Activated CD4-positive, alpha-beta T cell treated with anti-CD3 and anti-CD28 coated beads, Interleukin-2, amount 10 ng/mL, durations not matched to agents 24 days and 14 days (primary cell): ENCODE measurements at regions of chr17 and their contacts with region 1.

Region 1: DNA sequence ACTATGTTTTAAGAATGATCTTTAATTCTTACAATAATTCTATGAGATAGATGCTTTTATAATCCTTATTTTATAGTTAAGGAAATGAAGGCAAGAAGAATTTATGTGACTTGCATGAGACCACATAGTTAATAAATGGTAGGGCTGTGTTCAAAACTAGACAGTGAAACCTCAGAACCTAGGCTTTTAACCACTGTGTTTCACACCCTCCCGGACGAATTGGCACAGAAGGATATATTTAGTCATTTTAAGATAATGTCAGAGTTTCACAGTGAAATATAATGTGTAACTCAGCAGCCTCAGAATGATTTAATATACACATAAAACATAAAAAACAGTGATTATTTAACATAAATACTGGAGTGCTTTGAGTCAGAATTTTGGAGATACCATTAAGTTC is 57.0 kb downstream of the NSRP1 start:
- DNase-seq: no peak
- H3K4me3 Mint-ChIP-seq: no peak overlapping the region
- H3K27ac Mint-ChIP-seq: no peak overlapping the region
- H3K4me1 Mint-ChIP-seq: peaks cover 11% of the 10 kb centered on the region
- H3K27me3 Mint-ChIP-seq: no peaks in the 10 kb centered on the region

Region 2: DNA sequence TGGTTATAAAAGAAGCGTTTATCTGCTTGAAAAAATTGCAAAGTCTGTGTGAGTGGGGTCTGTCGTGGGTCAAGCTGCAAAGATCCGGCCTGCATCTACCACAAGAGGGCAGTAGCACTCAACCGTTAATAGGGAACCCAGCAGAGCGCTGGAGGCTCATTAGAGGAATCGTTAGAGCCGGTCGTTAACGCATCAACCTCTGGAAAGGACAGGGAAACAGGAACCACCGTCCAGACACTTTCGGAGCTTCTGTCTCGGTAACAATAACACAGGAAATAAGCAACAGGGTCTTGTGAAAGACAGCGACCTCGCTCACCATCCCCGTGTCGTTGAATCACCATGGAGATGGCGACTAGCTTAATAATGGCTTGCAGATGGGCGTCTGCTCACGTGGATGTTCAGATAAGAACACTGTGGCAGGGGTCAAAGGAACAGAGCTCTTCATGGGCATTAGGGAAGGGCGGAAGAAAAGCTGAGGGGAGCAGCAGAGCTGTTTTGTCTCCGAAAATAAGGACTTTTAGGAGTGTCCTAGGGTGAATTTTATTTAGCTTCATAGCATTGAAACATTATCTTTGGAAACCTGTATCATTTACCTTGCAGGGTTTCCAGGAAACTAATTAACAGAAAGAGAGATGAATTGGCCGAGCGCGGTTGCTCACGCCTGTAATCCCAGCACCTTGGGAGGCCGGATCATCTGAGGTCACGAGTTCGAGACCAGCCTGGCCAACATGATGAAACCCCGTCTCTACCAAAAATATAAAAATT is 68.9 kb before region 1 on chr17:
- intact Hi-C with region 1: no loop called
- DNase-seq: peak; percentile 91
- H3K4me3 Mint-ChIP-seq: peak overlapping the region; percentile 81
- H3K27ac Mint-ChIP-seq: no peak overlapping the region
- H3K4me1 Mint-ChIP-seq: peaks cover 5% of the 10 kb centered on the region
- H3K27me3 Mint-ChIP-seq: peaks cover 16% of the 10 kb centered on the region

Region 3: DNA sequence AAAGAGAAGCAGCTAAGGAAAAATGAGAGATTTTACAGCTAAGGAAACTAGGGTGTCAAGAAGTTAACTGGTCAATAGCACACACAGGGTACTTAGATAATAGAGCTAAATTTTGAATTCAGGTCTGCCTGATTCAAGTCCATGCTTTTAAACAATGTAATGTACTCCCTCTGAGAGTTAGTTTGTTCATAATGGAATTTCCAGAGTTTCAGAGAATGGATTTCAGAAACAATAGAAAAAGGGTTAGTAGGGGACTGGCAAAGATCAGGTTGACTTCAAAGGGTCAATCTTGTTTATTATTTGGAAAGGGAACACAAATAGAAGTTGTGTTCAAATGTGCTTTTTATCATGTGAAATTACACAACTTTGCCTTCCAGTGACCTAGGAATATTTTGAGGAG is 39.1 kb before region 1 on chr17:
- intact Hi-C with region 1: no loop called
- DNase-seq: no peak
- H3K4me3 Mint-ChIP-seq: no peak overlapping the region
- H3K27ac Mint-ChIP-seq: peak overlapping the region; percentile 27
- H3K4me1 Mint-ChIP-seq: peaks cover 22% of the 10 kb centered on the region
- H3K27me3 Mint-ChIP-seq: no peaks in the 10 kb centered on the region

Region 4: DNA sequence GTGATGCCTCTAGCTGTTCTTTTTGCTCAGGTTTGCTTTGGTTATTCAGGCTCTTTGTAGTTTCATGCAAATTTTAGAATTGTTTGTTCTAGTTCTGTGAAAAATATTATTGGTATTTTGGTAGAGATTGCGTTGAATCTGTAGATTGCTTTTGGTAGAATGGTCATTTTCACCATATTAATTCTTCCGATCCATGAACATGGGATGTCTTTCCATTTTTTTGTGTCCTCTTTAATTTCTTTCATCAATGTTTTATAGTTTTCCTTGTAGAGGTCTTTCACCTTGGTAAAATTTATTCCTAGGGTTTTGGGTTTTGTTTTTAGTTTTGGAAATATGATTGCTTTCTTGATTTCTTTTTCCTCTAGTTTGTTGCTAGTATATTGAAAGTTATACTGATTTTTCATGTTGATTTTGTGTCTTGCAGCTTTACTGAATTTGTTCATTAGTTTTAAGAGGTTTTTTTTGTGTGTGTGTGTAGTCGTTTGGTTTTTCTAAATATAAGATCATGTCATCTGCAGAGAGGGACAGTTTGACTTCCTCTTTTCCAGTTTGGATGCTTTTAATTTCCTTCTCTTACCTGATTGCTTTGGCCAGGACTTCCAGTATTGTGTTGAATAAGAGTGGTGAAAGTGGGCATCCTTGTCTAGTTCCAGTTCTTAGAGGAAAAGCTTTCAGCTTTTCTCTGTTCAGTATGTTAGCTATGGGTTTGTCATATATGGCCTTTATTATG is 14.6 kb before region 1 on chr17:
- intact Hi-C with region 1: loop called (anchors 2 kb)
- DNase-seq: no peak
- H3K4me3 Mint-ChIP-seq: no peak overlapping the region
- H3K27ac Mint-ChIP-seq: no peak overlapping the region
- H3K4me1 Mint-ChIP-seq: peaks cover 2% of the 10 kb centered on the region
- H3K27me3 Mint-ChIP-seq: no peaks in the 10 kb centered on the region

Region 5: GRCh38 chr17:30203471-30203981 is 29.9 kb after region 1 on chr17:
- intact Hi-C with region 1: no loop called
- DNase-seq: no peak
- H3K4me3 Mint-ChIP-seq: no peak overlapping the region
- H3K27ac Mint-ChIP-seq: no peak overlapping the region
- H3K4me1 Mint-ChIP-seq: no peaks in the 10 kb centered on the region
- H3K27me3 Mint-ChIP-seq: peaks cover 13% of the 10 kb centered on the region